ENCODE measurements at regions of chr1 and their contacts with region 1.

Region 1: GRCh38 chr1:204989266-204990058 is 53.5 kb upstream of the CNTN2 start:
- DNase-seq: no peak
- H3K4me3 ChIP-seq: no peak overlapping the region
- H3K27ac ChIP-seq: peak overlapping the region in 1 of 4 donors; percentile 21
- H3K4me1 ChIP-seq: no peaks in the 10 kb centered on the region
- H3K27me3 ChIP-seq: peaks cover 0 to 18% (median 0%) of the 10 kb centered on the region in 4 donors
- CTCF ChIP-seq: peak; percentile 65 to 97 (median 90)
- POLR2A ChIP-seq: no peak

Region 2: DNA sequence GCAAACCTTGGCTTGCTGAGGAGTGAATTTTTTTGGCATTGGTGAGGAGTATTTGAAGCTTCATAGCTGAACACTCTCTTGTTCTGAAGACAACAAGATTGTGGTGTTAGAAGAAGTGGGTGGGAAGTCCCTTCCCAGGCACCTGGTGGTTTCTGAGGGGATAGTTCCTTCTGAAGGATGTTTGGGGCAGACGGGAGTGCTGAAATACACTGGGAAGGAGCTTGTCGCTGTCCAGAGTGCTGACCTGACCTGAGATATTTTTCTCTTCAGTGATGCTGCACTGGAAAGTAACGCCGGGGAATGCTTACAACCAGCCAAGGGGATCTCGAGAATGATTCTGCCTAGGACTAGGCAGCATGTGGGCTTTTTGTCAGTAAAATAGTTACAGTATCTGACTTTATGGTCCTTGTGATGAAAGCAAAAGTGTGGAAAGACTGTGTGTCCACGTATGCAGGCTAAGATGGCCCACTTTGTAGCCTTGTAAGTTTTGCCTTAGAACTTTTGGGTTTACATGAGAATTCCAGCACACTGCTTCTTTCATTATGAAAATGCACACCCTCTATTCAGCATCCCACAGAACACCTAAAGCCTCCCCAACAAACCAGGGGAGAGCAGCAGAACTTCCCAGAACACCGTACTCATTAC is 151.9 kb before region 1 on chr1:
- intact Hi-C with region 1: no loop called
- DNase-seq: no peak
- H3K4me3 ChIP-seq: no peak overlapping the region
- H3K27ac ChIP-seq: no peak overlapping the region
- H3K4me1 ChIP-seq: peaks cover 0 to 3% (median 0%) of the 10 kb centered on the region in 3 donors
- H3K27me3 ChIP-seq: peaks cover 0 to 8% (median 0%) of the 10 kb centered on the region in 4 donors
- CTCF ChIP-seq: no peak
- POLR2A ChIP-seq: no peak

Region 3: GRCh38 chr1:205061665-205062069 is 72.2 kb after region 1 on chr1:
- intact Hi-C with region 1: loop called (anchors 5 kb)
- DNase-seq: no peak
- H3K4me3 ChIP-seq: no peak overlapping the region
- H3K27ac ChIP-seq: no peak overlapping the region
- H3K4me1 ChIP-seq: peaks cover 0 to 7% (median 4%) of the 10 kb centered on the region in 3 donors
- H3K27me3 ChIP-seq: peaks cover 0 to 22% (median 0%) of the 10 kb centered on the region in 4 donors
- CTCF ChIP-seq: peak; percentile 56 to 86 (median 78)
- POLR2A ChIP-seq: no peak

Region 4: GRCh38 chr1:205248793-205249601 is 259.5 kb after region 1 on chr1:
- intact Hi-C with region 1: loop called (anchors 10 kb)
- DNase-seq: no peak
- H3K4me3 ChIP-seq: no peak overlapping the region
- H3K27ac ChIP-seq: peak overlapping the region in 2 of 4 donors; percentile 36 to 53
- H3K4me1 ChIP-seq: peaks cover 0 to 52% (median 36%) of the 10 kb centered on the region in 3 donors
- H3K27me3 ChIP-seq: no peaks in the 10 kb centered on the region
- CTCF ChIP-seq: no peak
- POLR2A ChIP-seq: no peak